OCI-LY7 (cell line): ENCODE measurements at regions of chr16 and their contacts with region 1.

Region 1: DNA sequence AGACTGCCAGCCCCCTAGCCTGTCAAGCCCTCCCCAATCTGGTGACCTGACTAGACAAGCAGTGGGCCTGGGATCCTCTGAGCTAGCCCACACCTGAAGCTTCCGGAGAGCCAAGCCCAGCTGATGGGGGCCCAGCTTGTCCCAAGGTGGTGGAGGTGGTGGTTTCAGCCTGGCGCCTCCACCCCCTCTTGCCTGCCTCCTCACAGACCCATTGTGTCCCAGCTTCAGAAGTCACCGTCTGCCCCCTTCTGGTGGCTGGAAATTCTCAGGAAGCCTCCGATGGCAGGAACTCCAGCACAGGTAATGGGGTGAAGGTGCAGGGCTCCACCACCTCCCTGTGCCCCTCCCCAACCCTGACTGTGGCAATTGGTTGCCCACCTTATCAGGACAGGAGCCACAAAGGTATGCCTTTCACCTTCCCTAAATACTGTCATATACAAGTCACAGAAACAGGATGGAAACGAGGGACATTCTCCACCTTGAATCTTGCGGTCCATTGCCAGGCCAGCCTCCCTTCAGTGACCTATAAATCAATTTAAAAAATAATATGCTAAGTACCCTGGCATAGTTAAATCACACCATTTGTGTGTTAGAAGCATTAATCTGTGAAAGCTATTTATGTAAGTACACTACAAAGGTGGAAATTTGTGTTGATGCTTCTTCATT is 66.0 kb upstream of the ZNF423 start:
- DNase-seq: peak; percentile 58
- H3K4me3 ChIP-seq: no peak overlapping the region
- H3K27ac ChIP-seq: no peak overlapping the region
- H3K4me1 ChIP-seq: no peaks in the 10 kb centered on the region
- CTCF ChIP-seq: peak; percentile 75

Region 2: DNA sequence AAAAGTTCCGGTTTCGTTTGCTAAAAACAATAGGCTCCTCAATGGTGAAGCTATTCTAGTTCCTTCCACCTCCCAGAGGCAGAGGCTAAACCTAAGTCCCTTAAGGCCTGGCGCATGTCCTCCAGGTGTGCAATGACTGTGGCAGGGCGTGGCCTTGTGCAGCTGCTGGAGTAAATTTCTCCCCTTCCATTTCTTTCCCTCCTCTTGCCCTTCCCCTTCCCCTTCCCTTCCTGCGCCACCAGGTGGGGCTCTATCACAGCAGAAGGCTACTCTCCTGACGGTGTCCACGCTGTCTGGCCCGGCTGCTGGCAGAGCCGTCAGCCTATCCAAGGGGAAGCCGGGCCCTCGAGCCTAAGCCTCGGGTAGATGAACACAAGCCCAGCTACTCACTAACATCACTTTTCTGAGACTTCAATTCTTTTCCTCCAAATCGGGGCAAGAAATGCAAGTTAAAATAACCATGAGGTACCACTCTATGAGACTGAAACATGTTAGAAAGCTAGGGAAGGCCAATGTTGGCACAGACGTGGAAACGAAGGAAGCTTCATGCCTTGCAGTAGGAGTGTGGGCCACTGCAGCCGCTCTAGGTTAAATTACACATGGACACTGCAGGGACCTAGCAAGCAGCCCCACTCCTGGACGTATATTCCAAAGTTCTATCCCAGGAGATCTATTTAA is 513.9 kb before region 1 on chr16:
- CTCF ChIA-PET with region 1: no interaction called
- POLR2A ChIA-PET with region 1: no interaction called
- intact Hi-C with region 1: loop called (anchors 1 kb)
- DNase-seq: peak; percentile 90
- H3K4me3 ChIP-seq: no peak overlapping the region
- H3K27ac ChIP-seq: no peak overlapping the region
- H3K4me1 ChIP-seq: peaks cover 26% of the 10 kb centered on the region
- CTCF ChIP-seq: peak; percentile 95

Region 3: GRCh38 chr16:49932946-49933345 is 11.0 kb after region 1 on chr16:
- CTCF ChIA-PET with region 1: no interaction called
- POLR2A ChIA-PET with region 1: no interaction called
- intact Hi-C with region 1: no loop called
- DNase-seq: no peak
- H3K4me3 ChIP-seq: no peak overlapping the region
- H3K27ac ChIP-seq: no peak overlapping the region
- H3K4me1 ChIP-seq: no peaks in the 10 kb centered on the region
- CTCF ChIP-seq: no peak